IMR-90 (cell line): ENCODE measurements at regions of chr9 and their contacts with region 1.

Region 1: DNA sequence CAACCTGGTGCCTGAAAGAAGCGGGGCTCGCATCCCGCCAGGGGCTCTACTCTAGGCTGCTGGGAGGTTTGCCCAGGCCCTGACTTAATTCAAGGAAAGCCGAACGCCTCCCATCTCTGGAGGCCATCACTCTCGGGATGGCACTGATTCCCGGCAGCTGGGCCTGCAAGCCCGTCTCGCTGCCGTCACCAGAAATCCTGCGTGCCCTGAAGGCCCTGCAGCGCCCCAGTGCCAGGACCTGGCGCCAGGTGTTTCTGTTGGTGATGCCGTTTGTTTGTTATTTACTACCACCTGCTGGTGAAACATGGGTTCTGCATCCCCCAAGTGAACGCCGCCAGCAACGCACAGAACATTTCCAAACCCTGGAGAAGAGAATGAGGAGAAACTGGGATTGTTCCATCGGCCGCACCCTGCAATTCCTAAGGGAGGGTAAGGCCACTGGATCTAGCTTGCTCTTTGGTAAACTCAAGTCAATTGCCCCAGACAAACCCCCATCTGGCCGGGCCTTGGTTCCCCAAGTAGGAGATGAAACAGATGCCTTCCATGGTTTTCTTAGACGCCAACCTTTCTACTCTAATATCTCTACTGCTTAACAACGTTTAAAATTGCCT is 77.9 kb downstream of the AK8 start:
- DNase-seq: peak; percentile 63
- ATAC-seq: peak; percentile 93
- H3K4me3 ChIP-seq: no peak overlapping the region
- H3K27ac ChIP-seq: no peak overlapping the region
- H3K4me1 ChIP-seq: no peaks in the 10 kb centered on the region
- H3K27me3 ChIP-seq: peaks cover 51% of the 10 kb centered on the region
- CTCF ChIP-seq: peak; percentile 87
- POLR2A ChIP-seq: no peak
- RAD21 ChIP-seq: peak; percentile 90

Region 2: DNA sequence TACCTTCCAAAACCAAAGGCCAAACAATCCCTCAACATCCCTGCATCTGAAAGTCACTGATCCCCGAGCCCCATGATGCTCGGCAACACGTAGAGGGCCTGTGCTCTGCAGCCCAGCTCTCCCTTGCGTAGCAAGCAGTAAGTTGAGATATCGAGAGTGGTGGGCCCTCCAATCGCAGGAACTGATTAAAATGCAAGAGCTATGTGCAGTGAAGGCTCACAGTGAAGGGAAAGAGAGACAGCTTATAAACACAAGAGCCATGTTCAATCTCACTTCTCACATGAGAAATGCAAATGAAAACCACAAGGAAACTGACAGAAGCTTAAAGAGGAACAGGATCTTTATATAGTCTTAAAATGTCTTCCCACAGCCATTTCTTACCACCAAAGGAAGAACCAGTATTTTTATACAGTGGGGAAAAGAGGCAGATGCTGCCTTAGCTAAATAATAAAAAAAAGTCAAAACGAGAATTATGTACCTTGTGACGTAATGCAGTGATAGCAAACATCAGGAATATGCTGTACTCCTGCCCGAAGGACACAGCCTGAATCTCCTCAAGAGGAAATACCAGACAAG is 418.1 kb before region 1 on chr9:
- CTCF ChIA-PET with region 1: no interaction called
- POLR2A ChIA-PET with region 1: no interaction called
- dilution Hi-C with region 1: no loop called
- in situ Hi-C with region 1: no loop called
- intact Hi-C with region 1: no loop called
- DNase-seq: no peak
- ATAC-seq: no peak
- H3K4me3 ChIP-seq: no peak overlapping the region
- H3K27ac ChIP-seq: no peak overlapping the region
- H3K4me1 ChIP-seq: no peaks in the 10 kb centered on the region
- H3K27me3 ChIP-seq: no peaks in the 10 kb centered on the region
- CTCF ChIP-seq: no peak
- POLR2A ChIP-seq: no peak
- RAD21 ChIP-seq: no peak

Region 3: DNA sequence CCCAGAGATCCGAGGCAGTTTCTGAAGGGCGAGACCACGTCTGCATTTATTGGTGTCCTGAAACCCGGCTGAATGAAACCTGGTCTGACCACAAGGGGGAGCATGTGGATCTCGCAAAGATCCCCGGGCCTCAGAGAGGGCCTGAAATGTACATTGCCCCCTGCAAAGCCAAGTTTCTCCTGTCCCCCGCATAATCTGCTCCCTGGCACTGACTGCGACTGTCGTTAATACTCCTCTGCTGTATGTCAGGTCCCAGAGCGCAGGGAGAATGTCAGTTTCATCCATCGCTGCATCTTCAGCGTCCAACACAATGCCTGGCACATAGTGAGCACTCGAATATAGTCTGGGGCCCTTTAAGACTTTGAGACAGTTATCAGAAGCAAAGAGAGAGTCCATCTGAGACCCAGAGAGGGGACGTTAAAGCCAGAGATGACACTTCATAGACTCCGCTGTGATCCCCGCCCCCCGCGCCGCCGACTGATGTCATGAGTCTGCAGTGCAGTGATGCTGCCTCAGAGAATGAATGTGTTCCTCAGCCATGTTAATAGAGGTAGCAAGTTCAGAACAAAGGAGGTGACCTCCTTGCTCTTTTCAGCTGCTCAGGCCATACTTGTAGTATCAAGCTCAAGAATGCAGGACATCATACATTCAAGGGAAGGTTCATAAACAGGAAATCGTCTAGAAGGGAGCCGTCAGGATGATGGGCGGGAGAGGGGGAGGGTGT is 292.2 kb before region 1 on chr9:
- CTCF ChIA-PET with region 1: no interaction called
- POLR2A ChIA-PET with region 1: no interaction called
- dilution Hi-C with region 1: no loop called
- in situ Hi-C with region 1: loop called (anchors 5 kb)
- intact Hi-C with region 1: loop called (anchors 1 kb)
- DNase-seq: peak; percentile 67
- ATAC-seq: peak; percentile 94
- H3K4me3 ChIP-seq: no peak overlapping the region
- H3K27ac ChIP-seq: no peak overlapping the region
- H3K4me1 ChIP-seq: no peaks in the 10 kb centered on the region
- H3K27me3 ChIP-seq: peaks cover 56% of the 10 kb centered on the region
- CTCF ChIP-seq: peak; percentile 79
- POLR2A ChIP-seq: no peak
- RAD21 ChIP-seq: peak; percentile 85

Region 4: GRCh38 chr9:132651254-132651653 is 148.9 kb before region 1 on chr9:
- CTCF ChIA-PET with region 1: no interaction called
- POLR2A ChIA-PET with region 1: no interaction called
- dilution Hi-C with region 1: no loop called
- in situ Hi-C with region 1: no loop called
- intact Hi-C with region 1: loop called (anchors 1 kb)
- DNase-seq: peak; percentile 98
- ATAC-seq: peak; percentile 63
- H3K4me3 ChIP-seq: no peak overlapping the region
- H3K27ac ChIP-seq: no peak overlapping the region
- H3K4me1 ChIP-seq: peaks cover 10% of the 10 kb centered on the region
- H3K27me3 ChIP-seq: no peaks in the 10 kb centered on the region
- CTCF ChIP-seq: peak; percentile 73
- POLR2A ChIP-seq: no peak
- RAD21 ChIP-seq: peak; percentile 64

Region 5: DNA sequence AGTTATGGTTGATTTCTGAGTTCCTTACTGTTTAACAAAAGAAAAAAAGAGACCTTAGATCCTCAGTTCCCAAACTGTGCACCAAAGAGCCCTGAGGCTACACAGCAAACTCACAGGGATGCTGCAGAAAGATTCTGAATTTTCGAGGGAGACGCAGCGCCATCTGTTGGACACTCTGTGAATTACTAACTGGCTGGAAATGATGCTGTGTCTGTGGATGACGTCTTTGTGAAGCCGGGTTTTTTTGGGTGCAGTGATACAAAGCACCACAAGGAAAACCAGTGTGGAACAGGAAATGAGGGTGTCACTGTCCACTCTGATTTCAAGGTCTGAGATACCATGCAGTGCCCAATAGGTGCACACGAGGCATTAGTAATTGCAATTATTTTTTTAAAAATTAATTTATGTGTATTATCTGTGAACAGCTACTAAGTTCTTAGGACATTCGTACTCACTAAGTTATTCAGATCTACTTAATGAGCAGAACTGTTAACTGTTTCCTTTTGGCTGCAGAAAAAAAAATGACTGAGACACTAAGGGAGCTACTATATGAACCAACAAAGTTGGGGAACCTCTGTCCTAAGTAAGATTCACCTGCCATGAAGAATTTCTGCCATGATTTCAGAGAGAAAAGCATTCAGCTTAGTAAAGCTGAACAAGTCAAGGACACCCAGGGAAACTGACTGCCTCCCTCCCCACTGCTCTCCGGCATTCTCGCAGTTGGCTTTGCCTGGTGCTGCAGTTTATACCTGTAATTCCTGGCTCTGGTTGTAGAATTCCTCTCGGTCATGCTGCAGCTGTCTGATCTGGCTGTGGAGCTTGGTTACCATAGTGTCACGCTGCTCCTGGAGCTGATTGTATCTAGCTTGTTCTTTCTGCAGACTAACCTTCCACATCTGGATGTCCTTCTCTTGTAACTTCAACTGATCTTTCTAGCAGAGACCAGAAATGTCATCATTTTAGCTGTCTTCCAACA is 102.0 kb after region 1 on chr9:
- CTCF ChIA-PET with region 1: no interaction called
- POLR2A ChIA-PET with region 1: no interaction called
- dilution Hi-C with region 1: no loop called
- in situ Hi-C with region 1: no loop called
- intact Hi-C with region 1: loop called (anchors 5 kb)
- DNase-seq: peak; percentile 83
- ATAC-seq: peak; percentile 99
- H3K4me3 ChIP-seq: no peak overlapping the region
- H3K27ac ChIP-seq: no peak overlapping the region
- H3K4me1 ChIP-seq: no peaks in the 10 kb centered on the region
- H3K27me3 ChIP-seq: no peaks in the 10 kb centered on the region
- CTCF ChIP-seq: peak; percentile 88
- POLR2A ChIP-seq: no peak
- RAD21 ChIP-seq: peak; percentile 63

Region 6: DNA sequence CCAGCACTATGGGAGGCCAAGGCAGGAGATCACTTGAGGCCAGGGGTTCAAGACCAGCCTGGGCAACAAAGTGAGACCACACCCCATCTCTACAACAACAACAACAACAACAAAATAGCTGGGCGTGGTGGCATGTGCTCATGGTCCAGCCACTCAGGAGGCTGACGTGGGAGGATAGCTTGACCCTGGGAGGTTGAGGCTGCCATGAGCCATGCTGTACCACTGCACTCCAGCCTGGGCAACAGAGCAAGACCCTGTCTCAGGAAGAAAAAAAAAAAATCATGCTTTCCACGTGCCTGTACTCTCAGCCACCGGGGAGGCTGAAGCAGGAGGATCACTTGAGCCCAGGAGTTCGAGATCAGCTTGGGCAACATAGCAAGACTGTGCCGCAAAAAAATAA is 114.8 kb after region 1 on chr9:
- CTCF ChIA-PET with region 1: no interaction called
- POLR2A ChIA-PET with region 1: no interaction called
- dilution Hi-C with region 1: no loop called
- in situ Hi-C with region 1: no loop called
- intact Hi-C with region 1: no loop called
- DNase-seq: no peak
- ATAC-seq: no peak
- H3K4me3 ChIP-seq: no peak overlapping the region
- H3K27ac ChIP-seq: no peak overlapping the region
- H3K4me1 ChIP-seq: no peaks in the 10 kb centered on the region
- H3K27me3 ChIP-seq: no peaks in the 10 kb centered on the region
- CTCF ChIP-seq: no peak
- POLR2A ChIP-seq: no peak
- RAD21 ChIP-seq: no peak